ENCODE measurements at regions of chr6 and their contacts with region 1.

Region 1: DNA sequence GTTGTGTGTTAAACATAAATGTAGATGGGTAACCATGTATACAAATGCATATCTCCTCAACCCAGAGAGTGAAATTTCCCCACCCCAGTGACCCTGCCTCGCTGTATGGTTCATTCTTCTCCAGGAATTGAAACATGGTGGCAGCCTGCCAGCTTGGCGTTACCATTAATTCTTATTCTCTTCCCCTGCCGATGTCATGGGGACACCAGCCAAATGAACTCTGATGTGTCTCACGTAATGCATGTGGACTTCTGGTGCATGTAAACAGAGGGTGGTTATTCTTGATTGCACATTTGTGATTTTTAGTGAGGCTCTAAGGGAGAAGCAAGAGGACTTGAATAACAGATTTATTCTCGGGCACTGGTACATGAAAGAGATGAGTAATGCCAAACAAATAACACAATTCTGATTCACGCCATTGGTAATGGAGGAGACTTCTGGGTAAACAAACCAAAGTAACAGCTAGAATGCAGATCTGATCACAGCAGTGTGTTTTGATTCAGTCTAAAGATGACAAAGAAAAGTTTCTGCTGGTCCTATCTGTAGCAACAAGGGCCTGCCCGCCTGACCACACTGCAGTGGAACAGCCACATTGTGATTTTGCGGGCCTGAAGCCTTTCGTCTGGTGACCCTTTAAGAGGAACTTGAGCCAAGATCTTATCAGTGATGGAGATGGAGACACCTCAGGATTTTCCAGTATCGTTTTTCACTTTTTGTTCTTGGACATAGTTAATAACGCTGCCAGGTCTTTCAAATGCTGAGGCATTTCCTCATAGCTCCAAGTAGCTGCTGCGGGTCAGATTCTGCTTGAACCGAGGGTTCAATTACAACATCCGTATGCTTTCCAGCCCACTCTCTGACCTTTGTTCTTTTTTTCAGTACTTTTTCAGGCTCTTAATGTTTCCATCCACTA is 171.8 kb upstream of the AKAP12 start:
- DNase-seq: peak; percentile 98
- ATAC-seq: peak; percentile 71
- H3K4me3 ChIP-seq: peak overlapping the region in 1 of 2 experiments; percentile 6; a peak in 2 of 4 replicates
- H3K27ac ChIP-seq: peak overlapping the region; percentile 100
- H3K4me1 ChIP-seq: peaks cover 80 to 94% of the 10 kb centered on the region in 2 experiments
- H3K27me3 ChIP-seq: no peaks in the 10 kb centered on the region
- CTCF ChIP-seq: no peak
- POLR2A ChIP-seq: no peak
- RAD21 ChIP-seq: no peak

Region 2: GRCh38 chr6:150741633-150742504 is 326.1 kb before region 1 on chr6:
- CTCF ChIA-PET with region 1: no interaction called
- POLR2A ChIA-PET with region 1: no interaction called
- RAD21 ChIA-PET with region 1: no interaction called
- intact Hi-C with region 1: no loop called
- DNase-seq: peak; percentile 23
- ATAC-seq: peak; percentile 73
- H3K4me3 ChIP-seq: no peak overlapping the region
- H3K27ac ChIP-seq: no peak overlapping the region
- H3K4me1 ChIP-seq: no peaks in the 10 kb centered on the region
- H3K27me3 ChIP-seq: no peaks in the 10 kb centered on the region
- CTCF ChIP-seq: peak; percentile 58 to 70 (median 66)
- POLR2A ChIP-seq: no peak
- RAD21 ChIP-seq: peak; percentile 75

Region 3: DNA sequence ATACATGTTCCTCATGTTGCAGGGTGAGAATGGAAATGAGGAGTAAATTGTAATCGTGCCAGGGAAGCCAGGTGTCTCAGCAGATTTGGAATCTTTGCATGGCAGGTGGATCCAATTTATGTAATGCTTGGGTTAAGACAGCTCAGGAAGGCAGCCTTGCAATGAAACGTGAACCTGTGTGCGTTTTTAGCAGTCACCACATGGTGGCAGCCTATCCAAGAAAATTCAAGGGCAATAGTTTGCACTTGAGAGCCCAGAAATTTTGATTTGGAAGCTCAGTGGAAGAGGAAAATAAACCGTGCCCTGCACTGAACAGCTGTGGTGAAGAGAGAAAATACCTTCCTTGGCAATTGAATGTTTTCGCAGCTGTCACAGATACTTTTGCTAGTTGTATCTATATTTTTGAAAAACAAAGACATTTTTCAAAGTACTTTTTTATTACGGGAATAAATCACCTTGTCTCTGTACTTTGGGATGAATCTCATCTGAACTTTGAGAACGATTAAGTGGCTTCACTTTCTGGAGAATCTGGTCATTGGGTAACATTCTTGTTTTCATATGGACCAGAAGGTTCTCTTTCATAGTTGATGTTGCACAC is 176.0 kb before region 1 on chr6:
- CTCF ChIA-PET with region 1: interaction called, 4 read pairs
- POLR2A ChIA-PET with region 1: no interaction called
- RAD21 ChIA-PET with region 1: no interaction called
- intact Hi-C with region 1: loop called (anchors 10 kb)
- DNase-seq: peak; percentile 64
- ATAC-seq: peak; percentile 77
- H3K4me3 ChIP-seq: no peak overlapping the region
- H3K27ac ChIP-seq: no peak overlapping the region
- H3K4me1 ChIP-seq: peaks cover 14 to 39% of the 10 kb centered on the region in 2 experiments; a peak in 3 of 4 replicates
- H3K27me3 ChIP-seq: no peaks in the 10 kb centered on the region
- CTCF ChIP-seq: peak; percentile 74 to 86 (median 79)
- POLR2A ChIP-seq: no peak
- RAD21 ChIP-seq: peak; percentile 91

Region 4: GRCh38 chr6:150987371-150987828 is 80.5 kb before region 1 on chr6:
- CTCF ChIA-PET with region 1: no interaction called
- POLR2A ChIA-PET with region 1: no interaction called
- RAD21 ChIA-PET with region 1: no interaction called
- intact Hi-C with region 1: no loop called
- DNase-seq: no peak
- ATAC-seq: no peak
- H3K4me3 ChIP-seq: no peak overlapping the region
- H3K27ac ChIP-seq: no peak overlapping the region
- H3K4me1 ChIP-seq: peaks cover 0 to 6% of the 10 kb centered on the region in 2 experiments; a peak in 1 of 4 replicates
- H3K27me3 ChIP-seq: no peaks in the 10 kb centered on the region
- CTCF ChIP-seq: no peak
- POLR2A ChIP-seq: no peak
- RAD21 ChIP-seq: no peak

Region 5: DNA sequence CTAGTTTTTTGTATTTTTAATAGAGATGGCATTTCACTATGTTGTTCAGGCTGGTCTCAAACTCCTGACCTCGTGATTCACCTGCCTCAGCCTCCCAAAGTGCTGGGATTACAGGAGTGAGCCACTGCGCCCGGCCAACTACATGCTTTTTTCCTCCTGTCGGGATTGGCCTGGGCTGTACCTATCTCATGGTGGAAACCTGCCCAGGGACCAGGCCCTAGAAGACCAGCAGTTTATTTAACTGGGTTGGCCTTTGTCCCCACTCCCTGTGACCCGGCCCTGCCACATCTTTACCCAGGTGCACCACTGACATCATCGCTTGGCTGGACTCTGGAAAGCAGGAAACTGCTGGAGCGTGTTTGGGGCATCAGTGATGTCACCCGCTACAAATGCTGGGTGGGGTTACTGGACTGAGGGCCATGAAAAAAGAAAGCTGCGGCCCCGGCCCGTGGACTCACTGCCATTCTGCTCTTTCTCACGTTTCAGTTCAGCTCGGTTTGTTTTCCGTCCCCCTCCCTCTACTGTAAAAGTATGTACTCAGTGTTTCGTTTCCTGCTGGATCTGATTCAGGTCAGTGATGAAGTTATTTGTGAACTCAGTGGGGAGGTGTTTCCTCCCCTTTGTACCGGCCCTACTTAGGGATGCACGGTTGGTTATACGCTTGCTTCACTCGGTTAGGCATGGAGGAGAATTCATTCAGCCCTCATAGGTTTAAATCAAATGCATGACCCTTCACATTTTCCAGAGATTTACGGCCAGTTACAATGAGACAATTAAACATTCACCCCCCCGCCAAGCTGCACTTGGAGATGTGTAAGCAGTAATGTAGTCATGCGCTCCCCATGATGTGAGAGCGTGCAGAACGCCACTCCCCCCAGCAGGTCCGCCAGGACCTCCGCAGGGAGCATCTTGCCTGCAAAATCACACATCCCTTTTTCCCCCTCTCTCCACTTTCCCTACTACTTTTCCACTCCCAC is 23.2 kb before region 1 on chr6:
- CTCF ChIA-PET with region 1: no interaction called
- POLR2A ChIA-PET with region 1: interaction called, 28 read pairs
- RAD21 ChIA-PET with region 1: no interaction called
- intact Hi-C with region 1: no loop called
- DNase-seq: peak; percentile 82
- ATAC-seq: peak; percentile 49
- H3K4me3 ChIP-seq: peak overlapping the region; percentile 37 to 38
- H3K27ac ChIP-seq: peak overlapping the region; percentile 91
- H3K4me1 ChIP-seq: peaks cover 58 to 86% of the 10 kb centered on the region in 2 experiments
- H3K27me3 ChIP-seq: no peaks in the 10 kb centered on the region
- CTCF ChIP-seq: no peak
- POLR2A ChIP-seq: no peak
- RAD21 ChIP-seq: no peak

Region 6: GRCh38 chr6:151082079-151082478 is 14.1 kb after region 1 on chr6:
- CTCF ChIA-PET with region 1: no interaction called
- POLR2A ChIA-PET with region 1: interaction called, 12 read pairs
- RAD21 ChIA-PET with region 1: no interaction called
- intact Hi-C with region 1: no loop called
- DNase-seq: peak; percentile 88
- ATAC-seq: peak; percentile 76
- H3K4me3 ChIP-seq: peak overlapping the region; percentile 23 to 30; a peak in 3 of 4 replicates
- H3K27ac ChIP-seq: peak overlapping the region; percentile 95
- H3K4me1 ChIP-seq: peaks cover 70 to 87% of the 10 kb centered on the region in 2 experiments
- H3K27me3 ChIP-seq: no peaks in the 10 kb centered on the region
- CTCF ChIP-seq: no peak
- POLR2A ChIP-seq: peak; percentile 9
- RAD21 ChIP-seq: peak; percentile 22

Region 7: DNA sequence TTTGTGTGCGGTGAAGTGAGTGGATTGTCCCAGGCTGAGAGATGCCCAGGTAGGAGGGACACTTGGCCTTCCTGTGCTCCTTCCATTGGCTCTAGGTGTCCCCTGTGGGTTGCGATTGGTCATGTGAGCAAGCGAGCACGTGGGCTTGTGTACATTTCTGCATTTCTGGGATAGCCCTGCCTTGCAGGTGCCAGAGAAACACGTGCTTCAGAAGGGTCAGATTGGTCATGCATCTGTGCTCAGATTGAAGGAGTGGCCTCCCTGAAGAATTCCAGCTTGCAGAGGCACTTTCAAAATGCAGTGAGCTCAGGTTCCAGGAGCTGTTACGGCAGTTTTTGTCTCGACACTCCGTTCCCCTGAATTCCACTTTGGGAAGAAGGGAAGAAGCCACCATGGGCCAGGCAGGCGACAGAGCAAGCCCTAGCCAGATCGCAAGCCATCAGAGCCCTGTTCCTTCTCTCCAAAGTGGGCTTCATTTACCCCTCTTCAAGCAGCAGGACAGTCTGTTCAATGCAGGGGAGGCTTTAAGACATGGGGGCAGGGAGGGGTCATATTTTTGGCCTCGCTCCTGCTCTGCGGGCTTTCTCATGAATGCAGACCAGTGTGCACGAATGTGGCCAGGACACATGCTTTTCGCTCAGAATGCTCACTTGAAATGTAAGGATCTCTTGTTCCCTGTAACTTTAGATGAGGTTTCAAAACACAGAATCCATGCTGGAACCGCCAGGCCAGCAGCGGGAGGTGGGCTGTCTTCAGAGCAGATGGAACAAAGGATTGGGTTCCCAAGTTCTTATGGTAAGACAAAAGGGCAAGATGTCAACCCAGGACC is 93.2 kb after region 1 on chr6:
- CTCF ChIA-PET with region 1: no interaction called
- POLR2A ChIA-PET with region 1: no interaction called
- RAD21 ChIA-PET with region 1: no interaction called
- intact Hi-C with region 1: no loop called
- DNase-seq: no peak
- ATAC-seq: peak; percentile 57; the same call in 1 of the 2 replicates
- H3K4me3 ChIP-seq: no peak overlapping the region
- H3K27ac ChIP-seq: no peak overlapping the region
- H3K4me1 ChIP-seq: no peaks in the 10 kb centered on the region
- H3K27me3 ChIP-seq: no peaks in the 10 kb centered on the region
- CTCF ChIP-seq: no peak
- POLR2A ChIP-seq: no peak
- RAD21 ChIP-seq: no peak

Region 8: GRCh38 chr6:151209071-151209831 is 141.3 kb after region 1 on chr6:
- CTCF ChIA-PET with region 1: no interaction called
- POLR2A ChIA-PET with region 1: no interaction called
- RAD21 ChIA-PET with region 1: no interaction called
- intact Hi-C with region 1: loop called (anchors 5 kb)
- DNase-seq: peak; percentile 53
- ATAC-seq: peak; percentile 78
- H3K4me3 ChIP-seq: peak overlapping the region; percentile 23 to 51
- H3K27ac ChIP-seq: peak overlapping the region; percentile 34
- H3K4me1 ChIP-seq: peaks cover 9 to 39% of the 10 kb centered on the region in 2 experiments
- H3K27me3 ChIP-seq: no peaks in the 10 kb centered on the region
- CTCF ChIP-seq: no peak
- POLR2A ChIP-seq: no peak
- RAD21 ChIP-seq: peak; percentile 24

Region 9: DNA sequence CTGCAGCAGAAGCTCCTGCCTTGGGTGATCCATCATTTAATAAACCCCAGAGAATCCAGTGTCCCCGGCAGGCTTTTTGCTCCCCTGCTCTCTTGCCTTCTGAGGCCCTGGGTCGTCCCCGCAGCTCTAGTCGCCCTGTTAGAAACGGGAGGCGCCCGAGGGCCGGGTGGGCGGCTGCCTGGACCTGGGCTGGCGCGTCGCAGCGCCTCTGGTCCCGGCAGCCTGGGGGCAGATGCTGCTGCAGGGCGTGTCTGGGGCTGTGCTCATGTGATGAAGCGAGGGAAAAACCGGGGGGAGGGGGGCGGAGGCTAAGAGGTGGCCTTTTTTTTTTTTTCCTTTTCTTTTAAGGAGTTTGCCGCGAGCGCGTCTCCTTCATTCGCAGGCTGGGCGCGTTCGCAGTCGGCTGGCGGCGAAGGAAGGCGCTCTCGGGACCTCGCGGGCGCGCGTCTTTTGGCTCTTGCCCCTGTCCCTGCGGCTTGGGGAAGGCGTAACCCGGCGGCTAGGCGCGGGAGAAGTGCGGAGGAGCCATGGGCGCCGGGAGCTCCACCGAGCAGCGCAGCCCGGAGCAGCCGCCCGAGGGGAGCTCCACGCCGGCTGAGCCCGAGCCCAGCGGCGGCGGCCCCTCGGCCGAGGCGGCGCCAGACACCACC is 172.2 kb after region 1 on chr6:
- CTCF ChIA-PET with region 1: no interaction called
- POLR2A ChIA-PET with region 1: interaction called, 3 read pairs
- RAD21 ChIA-PET with region 1: no interaction called
- intact Hi-C with region 1: loop called (anchors 10 kb)
- DNase-seq: peak; percentile 59
- ATAC-seq: peak; percentile 82
- H3K4me3 ChIP-seq: peak overlapping the region; percentile 66 to 72
- H3K27ac ChIP-seq: peak overlapping the region; percentile 75
- H3K4me1 ChIP-seq: peaks cover 6 to 40% of the 10 kb centered on the region in 2 experiments; a peak in 3 of 4 replicates
- H3K27me3 ChIP-seq: no peaks in the 10 kb centered on the region
- CTCF ChIP-seq: no peak
- POLR2A ChIP-seq: peak; percentile 66
- RAD21 ChIP-seq: no peak

Region 10: GRCh38 chr6:151276112-151276745 is 208.3 kb after region 1 on chr6:
- CTCF ChIA-PET with region 1: no interaction called
- POLR2A ChIA-PET with region 1: no interaction called
- RAD21 ChIA-PET with region 1: no interaction called
- intact Hi-C with region 1: no loop called
- DNase-seq: no peak
- ATAC-seq: no peak
- H3K4me3 ChIP-seq: no peak overlapping the region
- H3K27ac ChIP-seq: no peak overlapping the region
- H3K4me1 ChIP-seq: peaks cover 3 to 40% of the 10 kb centered on the region in 2 experiments; a peak in 2 of 4 replicates
- H3K27me3 ChIP-seq: no peaks in the 10 kb centered on the region
- CTCF ChIP-seq: no peak
- POLR2A ChIP-seq: no peak
- RAD21 ChIP-seq: no peak

Measured in HCT116 (cell line).